ENCODE measurements at regions of chr19 and their contacts with region 1.

Region 1: GRCh38 chr19:42529248-42529764 is 1.0 kb upstream of the CEACAM1 start:
- DNase-seq: peak; percentile 49 to 89
- H3K4me3 ChIP-seq: no peak overlapping the region
- H3K27ac ChIP-seq: no peak overlapping the region
- H3K4me1 ChIP-seq: peaks cover 0 to 11% (median 7%) of the 10 kb centered on the region in 4 experiments; a peak in 5 of 7 replicates
- H3K27me3 ChIP-seq: no peaks in the 10 kb centered on the region
- CTCF ChIP-seq: peak; percentile 85 to 97 (median 96)
- EP300 ChIP-seq: no peak
- POLR2A ChIP-seq: no peak
- RAD21 ChIP-seq: peak; percentile 89 to 91

Region 2: DNA sequence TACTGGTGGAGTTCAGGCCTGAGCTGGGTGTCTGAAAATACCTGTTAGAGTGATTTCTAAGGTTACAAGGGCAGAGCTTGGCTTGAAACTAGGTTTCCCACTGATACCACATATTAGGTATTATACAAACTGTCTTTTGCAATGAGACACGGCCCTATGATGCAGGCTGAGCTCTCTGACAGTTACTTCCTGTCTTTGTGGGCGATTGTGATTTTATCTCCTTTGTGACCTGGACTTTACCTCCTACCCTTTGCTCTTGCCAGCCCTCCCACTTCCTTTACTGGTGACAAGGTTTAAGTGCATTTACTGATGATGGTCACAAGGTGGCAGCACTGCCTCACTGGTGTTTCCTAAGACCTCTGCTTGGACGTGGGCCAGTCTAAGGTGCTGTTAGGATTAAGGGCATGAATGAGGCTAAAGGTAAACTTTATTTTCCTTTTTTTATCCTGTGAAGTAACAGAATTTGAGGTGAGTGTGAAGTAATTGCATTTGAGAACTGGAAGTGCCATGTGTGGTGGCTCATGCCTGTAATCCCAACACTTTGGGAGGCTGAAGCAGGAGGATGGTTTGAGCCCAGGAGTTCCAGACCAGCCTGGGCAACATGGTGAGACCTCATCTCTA is 78.9 kb before region 1 on chr19:
- CTCF ChIA-PET with region 1: interaction called, 182 read pairs
- POLR2A ChIA-PET with region 1: interaction called, 3 read pairs
- DNase-seq: peak; percentile 38 to 72
- H3K4me3 ChIP-seq: no peak overlapping the region
- H3K27ac ChIP-seq: no peak overlapping the region
- H3K4me1 ChIP-seq: peaks cover 0 to 13% (median 5%) of the 10 kb centered on the region in 4 experiments; a peak in 4 of 7 replicates
- H3K27me3 ChIP-seq: no peaks in the 10 kb centered on the region; a peak in 1 of 7 replicates
- CTCF ChIP-seq: peak; percentile 71 to 95 (median 94)
- EP300 ChIP-seq: no peak
- POLR2A ChIP-seq: no peak
- RAD21 ChIP-seq: peak; percentile 98 to 100

Region 3: GRCh38 chr19:42461700-42462324 is 67.5 kb before region 1 on chr19:
- CTCF ChIA-PET with region 1: interaction called, 32 read pairs
- POLR2A ChIA-PET with region 1: no interaction called
- DNase-seq: no peak
- H3K4me3 ChIP-seq: no peak overlapping the region
- H3K27ac ChIP-seq: no peak overlapping the region
- H3K4me1 ChIP-seq: peaks cover 0 to 2% (median under 1%) of the 10 kb centered on the region in 4 experiments; a peak in 3 of 7 replicates
- H3K27me3 ChIP-seq: no peaks in the 10 kb centered on the region
- CTCF ChIP-seq: no peak
- EP300 ChIP-seq: no peak
- POLR2A ChIP-seq: no peak
- RAD21 ChIP-seq: no peak

Region 4: DNA sequence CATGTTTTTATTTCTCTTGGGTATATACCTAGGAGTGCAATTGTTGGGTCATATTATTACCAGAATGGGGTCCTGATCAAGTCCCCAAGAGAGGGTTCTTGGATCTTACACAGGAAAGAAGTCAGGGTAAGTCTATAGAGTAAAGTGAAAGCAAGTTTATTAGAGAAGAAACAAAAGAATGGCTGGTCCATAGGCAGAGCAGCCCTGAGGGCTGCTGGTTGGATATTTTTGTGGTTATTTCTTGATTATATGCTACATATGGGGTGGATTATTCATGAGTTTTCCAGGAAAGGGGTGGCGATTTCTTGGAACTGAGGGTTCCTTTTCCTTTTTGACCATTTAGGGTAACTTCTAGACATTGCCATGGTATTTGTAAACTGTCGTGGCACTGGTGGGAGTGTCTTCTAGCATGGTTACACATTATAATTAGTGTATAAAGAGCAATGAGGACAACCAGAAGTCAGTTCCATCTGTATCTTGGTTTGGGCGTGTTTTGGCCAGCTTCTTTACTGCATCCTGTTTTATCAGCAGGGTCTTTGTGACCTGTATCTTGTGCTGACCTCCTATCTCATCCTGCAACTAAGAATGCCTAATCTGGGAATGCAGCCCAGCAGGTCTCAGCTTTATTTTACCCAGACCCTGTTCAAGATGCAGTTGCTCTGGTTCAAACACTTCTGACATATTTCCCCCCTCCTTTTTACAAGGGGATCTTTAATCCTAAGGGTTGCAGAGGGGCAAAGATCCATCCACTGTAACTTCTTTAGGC is 42.1 kb before region 1 on chr19:
- CTCF ChIA-PET with region 1: interaction called, 23 read pairs
- POLR2A ChIA-PET with region 1: no interaction called
- DNase-seq: no peak
- H3K4me3 ChIP-seq: no peak overlapping the region
- H3K27ac ChIP-seq: no peak overlapping the region
- H3K4me1 ChIP-seq: peaks cover 0 to 4% (median 1%) of the 10 kb centered on the region in 4 experiments; a peak in 3 of 7 replicates
- H3K27me3 ChIP-seq: no peaks in the 10 kb centered on the region
- CTCF ChIP-seq: no peak
- EP300 ChIP-seq: no peak
- POLR2A ChIP-seq: no peak
- RAD21 ChIP-seq: no peak

Region 5: GRCh38 chr19:42508892-42509444 is 20.3 kb before region 1 on chr19:
- CTCF ChIA-PET with region 1: interaction called, 33 read pairs
- POLR2A ChIA-PET with region 1: no interaction called
- DNase-seq: no peak
- H3K4me3 ChIP-seq: no peak overlapping the region
- H3K27ac ChIP-seq: no peak overlapping the region
- H3K4me1 ChIP-seq: peaks cover 0 to 9% (median 2%) of the 10 kb centered on the region in 4 experiments; a peak in 2 of 7 replicates
- H3K27me3 ChIP-seq: no peaks in the 10 kb centered on the region; a peak in 1 of 7 replicates
- CTCF ChIP-seq: no peak
- EP300 ChIP-seq: no peak
- POLR2A ChIP-seq: no peak
- RAD21 ChIP-seq: no peak

Region 6: GRCh38 chr19:42540071-42540553 is 10.8 kb after region 1 on chr19:
- CTCF ChIA-PET with region 1: interaction called, 39 read pairs
- POLR2A ChIA-PET with region 1: interaction called, 3 read pairs
- DNase-seq: peak in 1 of 2 experiments; percentile 61
- H3K4me3 ChIP-seq: peak overlapping the region in 1 of 4 experiments; percentile 18; a peak in 1 of 8 replicates
- H3K27ac ChIP-seq: no peak overlapping the region
- H3K4me1 ChIP-seq: peaks cover 4 to 12% (median 9%) of the 10 kb centered on the region in 4 experiments
- H3K27me3 ChIP-seq: no peaks in the 10 kb centered on the region; a peak in 3 of 7 replicates
- CTCF ChIP-seq: no peak
- EP300 ChIP-seq: no peak
- POLR2A ChIP-seq: no peak
- RAD21 ChIP-seq: no peak

Measured in H1 (cell line).